T-cell (primary cell): ENCODE measurements at regions of chr12 and their contacts with region 1.

Region 1: DNA sequence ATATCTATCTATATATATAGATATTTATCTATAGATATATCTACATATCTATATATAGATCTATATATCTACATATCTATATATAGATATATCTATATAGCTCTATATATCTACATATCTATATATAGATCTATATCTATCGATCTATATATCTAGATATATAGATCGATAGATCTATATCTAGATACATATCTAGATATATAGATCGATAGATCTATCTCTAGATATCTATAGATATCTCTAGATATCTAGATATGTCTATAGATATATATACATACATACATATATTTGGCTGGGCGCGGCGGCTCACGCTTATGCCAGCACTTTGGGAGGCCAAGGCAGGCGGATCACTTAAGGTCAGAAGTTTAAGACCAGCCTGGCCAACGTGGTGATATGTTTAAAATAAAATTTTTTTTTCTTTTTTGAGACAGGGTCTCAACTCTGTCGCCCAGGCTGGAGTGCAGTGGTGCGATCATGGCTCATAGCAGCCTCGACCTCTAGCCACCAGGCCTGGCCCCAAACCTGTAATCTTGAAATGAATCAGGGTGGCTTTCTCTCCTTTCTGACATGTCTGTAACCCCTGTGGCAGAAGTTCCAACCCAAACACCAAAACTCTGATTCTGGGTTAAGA is 18.1 kb downstream of the ARPC3 start:
- DNase-seq: no peak
- ATAC-seq: peak in 1 of 4 experiments; percentile 26
- H3K4me3 ChIP-seq: peak overlapping the region in 1 of 2 donors; percentile 55
- H3K4me3 Mint-ChIP-seq: peak overlapping the region in 1 of 3 donors; percentile 100
- H3K27ac ChIP-seq: no peak overlapping the region
- H3K27ac Mint-ChIP-seq: no peak overlapping the region
- H3K4me1 ChIP-seq: peaks cover 0 to 4% of the 10 kb centered on the region in 2 experiments
- H3K4me1 Mint-ChIP-seq: peaks cover 0 to 3% (median 0%) of the 10 kb centered on the region in 3 donors
- H3K27me3 ChIP-seq: peaks cover 0 to 7% of the 10 kb centered on the region in 2 experiments
- H3K27me3 Mint-ChIP-seq: no peaks in the 10 kb centered on the region

Region 2: GRCh38 chr12:110124184-110124995 is 307.7 kb before region 1 on chr12 and contains the start of gene IFT81:
- CTCF ChIA-PET with region 1: interaction called in 1 of 2 experiments, 10 read pairs
- POLR2A ChIA-PET with region 1: no interaction called
- DNase-seq: peak; percentile 85 to 99 (median 94)
- ATAC-seq: peak; percentile 90 to 94 (median 92)
- H3K4me3 ChIP-seq: peak within 1 kb of the TSS; percentile 80 to 99
- H3K4me3 Mint-ChIP-seq: peak within 1 kb of the TSS; percentile 78 to 92 (median 88)
- H3K27ac ChIP-seq: peak within 1 kb of the TSS; percentile 61
- H3K27ac Mint-ChIP-seq: peak within 1 kb of the TSS in 1 of 2 donors; percentile 78
- H3K4me1 ChIP-seq: peaks cover 0 to 11% of the 10 kb centered on the region in 2 experiments
- H3K4me1 Mint-ChIP-seq: peaks cover 0 to 8% (median 7%) of the 10 kb centered on the region in 3 donors
- H3K27me3 ChIP-seq: peaks cover 0 to 5% of the 10 kb centered on the region in 2 experiments
- H3K27me3 Mint-ChIP-seq: peaks cover 0 to 6% of the 10 kb centered on the region in 2 donors
- total RNA-seq, gene IFT81: 0.73 to 2.3 (median 1.5) TPM

Region 3: GRCh38 chr12:110270125-110270962 is 161.7 kb before region 1 on chr12:
- CTCF ChIA-PET with region 1: no interaction called
- POLR2A ChIA-PET with region 1: no interaction called
- DNase-seq: no peak
- ATAC-seq: no peak
- H3K4me3 ChIP-seq: no peak overlapping the region
- H3K4me3 Mint-ChIP-seq: no peak overlapping the region
- H3K27ac ChIP-seq: no peak overlapping the region
- H3K27ac Mint-ChIP-seq: no peak overlapping the region
- H3K4me1 ChIP-seq: no peaks in the 10 kb centered on the region
- H3K4me1 Mint-ChIP-seq: no peaks in the 10 kb centered on the region
- H3K27me3 ChIP-seq: peaks cover 0 to 24% of the 10 kb centered on the region in 2 experiments
- H3K27me3 Mint-ChIP-seq: peaks cover 14 to 19% of the 10 kb centered on the region in 2 donors

Region 4: GRCh38 chr12:110347767-110348166 is 84.3 kb before region 1 on chr12:
- CTCF ChIA-PET with region 1: interaction called, 4 to 5 read pairs
- POLR2A ChIA-PET with region 1: interaction called in 1 of 2 experiments, 10 read pairs
- DNase-seq: no peak
- ATAC-seq: no peak
- H3K4me3 ChIP-seq: no peak overlapping the region
- H3K4me3 Mint-ChIP-seq: no peak overlapping the region
- H3K27ac ChIP-seq: no peak overlapping the region
- H3K27ac Mint-ChIP-seq: peak overlapping the region in 1 of 2 donors; percentile 28
- H3K4me1 ChIP-seq: peaks cover 17 to 19% of the 10 kb centered on the region in 2 experiments
- H3K4me1 Mint-ChIP-seq: peaks cover 22 to 35% (median 31%) of the 10 kb centered on the region in 3 donors
- H3K27me3 ChIP-seq: no peaks in the 10 kb centered on the region
- H3K27me3 Mint-ChIP-seq: no peaks in the 10 kb centered on the region

Region 5: GRCh38 chr12:110403146-110403975 is 28.7 kb before region 1 on chr12 and contains the start of gene ANAPC7:
- CTCF ChIA-PET with region 1: interaction called, 3 to 10 read pairs
- POLR2A ChIA-PET with region 1: no interaction called
- DNase-seq: peak; percentile 68 to 91 (median 82)
- ATAC-seq: peak; percentile 89 to 95 (median 92)
- H3K4me3 ChIP-seq: peak within 1 kb of the TSS; percentile 81 to 94
- H3K4me3 Mint-ChIP-seq: peak within 1 kb of the TSS in 2 of 3 donors; percentile 98 to 99
- H3K27ac ChIP-seq: peak within 1 kb of the TSS; percentile 79
- H3K27ac Mint-ChIP-seq: peak within 1 kb of the TSS; percentile 99 to 100
- H3K4me1 ChIP-seq: peaks cover 8 to 26% of the 10 kb centered on the region in 2 experiments
- H3K4me1 Mint-ChIP-seq: peaks cover 37 to 44% (median 42%) of the 10 kb centered on the region in 3 donors
- H3K27me3 ChIP-seq: no peaks in the 10 kb centered on the region
- H3K27me3 Mint-ChIP-seq: no peaks in the 10 kb centered on the region
- total RNA-seq, gene ANAPC7: 40.8 to 60.4 (median 57.6) TPM

Region 6: GRCh38 chr12:110468212-110469048 is 36.4 kb after region 1 on chr12 and contains the starts of genes FAM216A and GPN3:
- CTCF ChIA-PET with region 1: interaction called in 1 of 2 experiments, 20 read pairs
- POLR2A ChIA-PET with region 1: no interaction called
- DNase-seq: peak; percentile 90 to 97 (median 93)
- ATAC-seq: peak; percentile 84 to 90 (median 86)
- H3K4me3 ChIP-seq: peak within 1 kb of the TSS; percentile 84 to 91
- H3K4me3 Mint-ChIP-seq: peak within 1 kb of the TSS; percentile 81 to 97 (median 97)
- H3K27ac ChIP-seq: peak within 1 kb of the TSS; percentile 81
- H3K27ac Mint-ChIP-seq: peak within 1 kb of the TSS; percentile 90 to 93
- H3K4me1 ChIP-seq: peaks cover 10 to 26% of the 10 kb centered on the region in 2 experiments
- H3K4me1 Mint-ChIP-seq: peaks cover 30 to 44% (median 41%) of the 10 kb centered on the region in 3 donors
- H3K27me3 ChIP-seq: no peaks in the 10 kb centered on the region
- H3K27me3 Mint-ChIP-seq: no peaks in the 10 kb centered on the region
- total RNA-seq, gene FAM216A: 6.3 to 16.5 (median 13.2) TPM
- total RNA-seq, gene GPN3: 6.3 to 19.1 (median 13.4) TPM

Region 7: DNA sequence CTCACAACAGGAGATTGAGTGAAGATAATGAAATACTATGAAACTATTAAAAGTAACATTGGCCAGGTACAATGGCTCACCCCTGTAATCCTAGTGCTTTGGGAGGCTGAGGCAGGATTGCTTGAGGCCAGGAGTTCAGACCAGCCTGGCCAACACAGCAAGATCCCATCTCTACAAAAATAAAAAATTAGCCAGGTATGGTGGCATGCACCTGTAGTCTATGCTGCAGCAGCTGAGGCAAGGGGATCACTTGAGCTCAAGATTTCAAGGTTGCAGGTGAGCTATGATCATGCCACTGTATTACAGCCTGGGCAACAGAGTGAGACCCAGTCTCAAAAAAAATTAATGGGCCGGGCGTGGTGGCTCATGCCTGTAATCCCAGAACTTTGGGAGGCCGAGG is 84.9 kb after region 1 on chr12:
- CTCF ChIA-PET with region 1: no interaction called
- POLR2A ChIA-PET with region 1: no interaction called
- DNase-seq: no peak
- ATAC-seq: no peak
- H3K4me3 ChIP-seq: no peak overlapping the region
- H3K4me3 Mint-ChIP-seq: no peak overlapping the region
- H3K27ac ChIP-seq: no peak overlapping the region
- H3K27ac Mint-ChIP-seq: no peak overlapping the region
- H3K4me1 ChIP-seq: no peaks in the 10 kb centered on the region
- H3K4me1 Mint-ChIP-seq: peaks cover 0 to 6% (median 4%) of the 10 kb centered on the region in 3 donors
- H3K27me3 ChIP-seq: no peaks in the 10 kb centered on the region
- H3K27me3 Mint-ChIP-seq: peaks cover 0 to 2% of the 10 kb centered on the region in 2 donors